T-cell (primary cell): ENCODE measurements at regions of chr13 and their contacts with region 1.

Region 1: GRCh38 chr13:99041788-99042187 is 63.9 kb upstream of the DOCK9 start:
- DNase-seq: no peak
- ATAC-seq: no peak
- H3K4me3 ChIP-seq: no peak overlapping the region
- H3K4me3 Mint-ChIP-seq: no peak overlapping the region
- H3K27ac ChIP-seq: peak overlapping the region; percentile 42
- H3K27ac Mint-ChIP-seq: peak overlapping the region; percentile 97 to 98
- H3K4me1 ChIP-seq: peaks cover 30 to 58% of the 10 kb centered on the region in 2 experiments
- H3K4me1 Mint-ChIP-seq: peaks cover 76 to 86% (median 83%) of the 10 kb centered on the region in 3 donors
- H3K27me3 ChIP-seq: no peaks in the 10 kb centered on the region
- H3K27me3 Mint-ChIP-seq: no peaks in the 10 kb centered on the region

Region 2: GRCh38 chr13:98471934-98472333 is 569.9 kb before region 1 on chr13:
- CTCF ChIA-PET with region 1: no interaction called
- POLR2A ChIA-PET with region 1: interaction called in 1 of 2 experiments, 10 read pairs
- DNase-seq: no peak
- ATAC-seq: no peak
- H3K4me3 ChIP-seq: no peak overlapping the region
- H3K4me3 Mint-ChIP-seq: no peak overlapping the region
- H3K27ac ChIP-seq: no peak overlapping the region
- H3K27ac Mint-ChIP-seq: peak overlapping the region; percentile 68 to 87
- H3K4me1 ChIP-seq: peaks cover 2 to 23% of the 10 kb centered on the region in 2 experiments
- H3K4me1 Mint-ChIP-seq: peaks cover 33 to 46% (median 42%) of the 10 kb centered on the region in 3 donors
- H3K27me3 ChIP-seq: no peaks in the 10 kb centered on the region
- H3K27me3 Mint-ChIP-seq: no peaks in the 10 kb centered on the region

Region 3: DNA sequence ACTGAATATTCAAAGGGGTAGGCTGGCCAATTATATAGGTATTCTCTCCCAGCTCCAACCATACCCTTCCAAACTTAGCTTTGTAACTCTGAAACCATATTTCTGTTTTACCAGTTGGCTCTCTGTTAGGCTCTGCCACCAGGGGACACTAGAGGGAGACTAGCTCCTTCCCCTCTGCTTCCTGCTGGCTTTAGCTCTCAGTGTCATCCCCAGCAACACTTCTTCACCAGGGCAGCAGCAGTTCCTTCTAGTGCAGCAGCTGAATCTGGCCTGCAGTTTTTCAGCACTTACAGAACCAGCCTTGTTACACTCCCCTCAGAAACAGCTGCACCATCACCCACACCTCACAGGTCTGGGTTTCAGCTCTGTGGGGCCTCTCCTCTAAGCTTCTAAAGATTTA is 12.9 kb before region 1 on chr13:
- CTCF ChIA-PET with region 1: interaction called in 1 of 2 experiments, 11 read pairs
- POLR2A ChIA-PET with region 1: no interaction called
- DNase-seq: peak in 33 of 35 experiments; percentile 12 to 73 (median 43)
- ATAC-seq: peak; percentile 30 to 75 (median 52)
- H3K4me3 ChIP-seq: no peak overlapping the region
- H3K4me3 Mint-ChIP-seq: no peak overlapping the region
- H3K27ac ChIP-seq: peak overlapping the region; percentile 2
- H3K27ac Mint-ChIP-seq: peak overlapping the region in 1 of 2 donors; percentile 49
- H3K4me1 ChIP-seq: peaks cover 0 to 9% of the 10 kb centered on the region in 2 experiments
- H3K4me1 Mint-ChIP-seq: peaks cover 65 to 92% (median 86%) of the 10 kb centered on the region in 3 donors
- H3K27me3 ChIP-seq: no peaks in the 10 kb centered on the region
- H3K27me3 Mint-ChIP-seq: no peaks in the 10 kb centered on the region

Region 4: GRCh38 chr13:99067160-99067985 is 25.6 kb after region 1 on chr13:
- CTCF ChIA-PET with region 1: interaction called, 3 to 11 read pairs
- POLR2A ChIA-PET with region 1: no interaction called
- DNase-seq: no peak
- ATAC-seq: no peak
- H3K4me3 ChIP-seq: no peak overlapping the region
- H3K4me3 Mint-ChIP-seq: peak overlapping the region in 1 of 3 donors; percentile 53
- H3K27ac ChIP-seq: no peak overlapping the region
- H3K27ac Mint-ChIP-seq: peak overlapping the region; percentile 74 to 84
- H3K4me1 ChIP-seq: peaks cover 16 to 32% of the 10 kb centered on the region in 2 experiments
- H3K4me1 Mint-ChIP-seq: peaks cover 85 to 90% (median 86%) of the 10 kb centered on the region in 3 donors
- H3K27me3 ChIP-seq: no peaks in the 10 kb centered on the region
- H3K27me3 Mint-ChIP-seq: no peaks in the 10 kb centered on the region

Region 5: GRCh38 chr13:99072951-99073350 is 31.2 kb after region 1 on chr13:
- CTCF ChIA-PET with region 1: interaction called in 1 of 2 experiments, 11 read pairs
- POLR2A ChIA-PET with region 1: interaction called in 1 of 2 experiments, 12 read pairs
- DNase-seq: no peak
- ATAC-seq: no peak
- H3K4me3 ChIP-seq: no peak overlapping the region
- H3K4me3 Mint-ChIP-seq: no peak overlapping the region
- H3K27ac ChIP-seq: no peak overlapping the region
- H3K27ac Mint-ChIP-seq: peak overlapping the region; percentile 58 to 81
- H3K4me1 ChIP-seq: peaks cover 18 to 34% of the 10 kb centered on the region in 2 experiments
- H3K4me1 Mint-ChIP-seq: peaks cover 85 to 89% (median 85%) of the 10 kb centered on the region in 3 donors
- H3K27me3 ChIP-seq: no peaks in the 10 kb centered on the region
- H3K27me3 Mint-ChIP-seq: no peaks in the 10 kb centered on the region

Region 6: GRCh38 chr13:99214232-99214631 is 172.4 kb after region 1 on chr13:
- CTCF ChIA-PET with region 1: no interaction called
- POLR2A ChIA-PET with region 1: interaction called in 1 of 2 experiments, 14 read pairs
- DNase-seq: peak in 12 of 35 experiments; percentile 12 to 51 (median 34)
- ATAC-seq: peak in 2 of 4 experiments; percentile 9 to 19
- H3K4me3 ChIP-seq: peak overlapping the region; percentile 47 to 54
- H3K4me3 Mint-ChIP-seq: peak overlapping the region; percentile 90 to 93 (median 90)
- H3K27ac ChIP-seq: peak overlapping the region; percentile 83
- H3K27ac Mint-ChIP-seq: peak overlapping the region; percentile 98 to 99
- H3K4me1 ChIP-seq: peaks cover 53 to 65% of the 10 kb centered on the region in 2 experiments
- H3K4me1 Mint-ChIP-seq: peaks cover 82 to 85% (median 84%) of the 10 kb centered on the region in 3 donors
- H3K27me3 ChIP-seq: no peaks in the 10 kb centered on the region
- H3K27me3 Mint-ChIP-seq: no peaks in the 10 kb centered on the region